Caco-2 (cell line): ENCODE measurements at regions of chr17 and their contacts with region 1.

Region 1: GRCh38 chr17:7239091-7240027 is at the start of gene PHF23:
- DNase-seq: peak; percentile 93 to 96
- H3K4me3 ChIP-seq: peak within 1 kb of the TSS; percentile 77
- H3K4me3 Mint-ChIP-seq: peak within 1 kb of the TSS; percentile 94
- H3K27ac Mint-ChIP-seq: peak within 1 kb of the TSS; percentile 82
- H3K4me1 ChIP-seq: peaks cover 6% of the 10 kb centered on the region; the same call in 1 of the 2 replicates
- H3K4me1 Mint-ChIP-seq: peaks cover 22% of the 10 kb centered on the region
- H3K27me3 ChIP-seq: no peaks in the 10 kb centered on the region
- H3K27me3 Mint-ChIP-seq: peaks cover 3% of the 10 kb centered on the region
- CTCF ChIP-seq: no peak
- total RNA-seq, gene PHF23: 20.5 and 20.6 TPM in 2 replicates

Region 2: DNA sequence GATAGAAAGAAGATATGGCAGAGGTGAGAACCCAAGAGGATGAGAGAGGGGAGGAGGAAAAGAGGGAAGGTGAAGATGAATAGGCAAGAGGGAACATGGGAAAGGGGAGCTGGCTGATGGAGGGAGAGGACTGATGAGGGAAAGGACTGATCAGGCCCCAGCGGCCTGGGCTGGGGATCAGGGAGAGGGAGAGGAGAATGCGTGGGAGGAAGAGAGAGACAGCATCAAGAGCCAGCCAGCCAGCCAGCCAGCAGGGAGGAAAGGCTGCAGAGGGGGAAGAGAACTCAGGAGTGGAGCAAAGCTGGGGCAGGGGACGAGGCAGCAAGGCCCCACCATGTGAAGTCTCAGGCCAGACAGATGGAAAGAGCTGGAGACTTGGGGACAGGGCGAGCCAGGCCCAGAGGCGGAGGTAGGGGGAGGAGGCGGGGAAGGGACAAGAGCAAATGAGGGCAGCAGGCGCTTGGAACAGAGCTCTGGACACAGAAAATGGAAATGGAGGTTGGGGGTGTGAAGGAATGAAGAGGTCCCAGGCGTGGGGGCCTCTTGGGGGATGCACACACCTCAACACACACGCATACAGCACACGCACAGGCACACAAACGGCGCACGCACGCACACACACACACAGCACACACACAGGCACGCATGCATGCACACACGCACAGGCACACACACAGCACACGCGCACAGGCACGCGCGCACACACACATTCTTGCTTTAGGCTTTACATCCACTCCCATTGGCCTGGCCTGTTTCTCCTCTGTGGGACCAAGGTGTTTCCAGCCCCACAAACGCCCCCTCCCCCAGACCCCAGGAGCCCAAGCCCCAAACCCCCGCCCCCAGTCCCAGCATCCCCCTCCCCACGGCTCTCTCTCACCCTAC is 32.0 kb before region 1 on chr17:
- CTCF ChIA-PET with region 1: no interaction called
- POLR2A ChIA-PET with region 1: no interaction called
- intact Hi-C with region 1: no loop called
- DNase-seq: no peak
- H3K4me3 ChIP-seq: no peak overlapping the region
- H3K4me3 Mint-ChIP-seq: no peak overlapping the region
- H3K27ac Mint-ChIP-seq: no peak overlapping the region
- H3K4me1 ChIP-seq: no peaks in the 10 kb centered on the region
- H3K4me1 Mint-ChIP-seq: peaks cover 6% of the 10 kb centered on the region
- H3K27me3 ChIP-seq: no peaks in the 10 kb centered on the region
- H3K27me3 Mint-ChIP-seq: no peaks in the 10 kb centered on the region
- CTCF ChIP-seq: no peak

Region 3: DNA sequence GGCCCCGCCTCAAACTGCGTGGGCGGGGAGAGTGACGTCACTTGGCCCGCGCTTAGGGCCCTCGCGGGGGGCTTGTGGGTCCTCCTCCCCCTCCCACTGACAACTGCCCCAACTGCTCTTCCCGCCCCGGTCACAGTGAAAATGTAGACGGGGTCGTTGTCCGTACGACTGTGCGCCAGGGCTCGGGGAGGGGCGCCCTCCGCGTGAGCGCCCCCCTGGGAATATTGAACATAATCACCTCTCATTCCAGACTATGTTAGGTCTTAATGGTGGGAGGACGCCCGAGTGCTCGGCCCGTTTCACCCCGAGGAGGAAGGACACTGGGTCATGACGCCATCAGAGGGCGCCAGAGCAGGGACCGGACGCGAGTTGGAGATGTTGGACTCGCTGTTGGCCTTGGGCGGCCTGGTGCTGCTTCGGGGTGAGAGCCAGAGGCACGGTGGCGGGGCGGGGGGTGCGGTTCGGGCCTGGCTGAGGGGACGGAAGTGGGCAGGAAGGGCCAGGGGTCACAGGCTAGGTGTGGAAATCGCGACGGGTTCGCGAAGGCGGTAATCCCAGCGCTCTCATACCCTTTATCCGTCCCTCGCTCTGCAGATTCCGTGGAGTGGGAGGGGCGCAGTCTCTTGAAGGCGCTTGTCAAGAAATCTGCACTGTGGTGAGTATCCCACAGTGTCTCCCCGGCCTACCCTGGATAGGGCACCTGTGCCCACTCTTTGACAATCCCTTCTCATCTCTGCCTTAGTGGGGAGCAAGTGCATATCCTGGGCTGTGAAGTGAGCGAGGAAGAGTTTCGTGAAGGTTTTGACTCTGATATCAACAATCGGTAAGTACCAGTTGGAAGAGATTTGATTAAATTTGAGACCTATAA is 13.1 kb after region 1 on chr17 and contains the start of gene ELP5:
- CTCF ChIA-PET with region 1: interaction called, 3 read pairs
- POLR2A ChIA-PET with region 1: interaction called, 3 read pairs
- intact Hi-C with region 1: loop called (anchors 1 kb)
- DNase-seq: peak; percentile 88 to 93
- H3K4me3 ChIP-seq: peak within 1 kb of the TSS; percentile 70
- H3K4me3 Mint-ChIP-seq: peak within 1 kb of the TSS; percentile 88
- H3K27ac Mint-ChIP-seq: peak within 1 kb of the TSS; percentile 98
- H3K4me1 ChIP-seq: no peaks in the 10 kb centered on the region
- H3K4me1 Mint-ChIP-seq: peaks cover 11% of the 10 kb centered on the region
- H3K27me3 ChIP-seq: no peaks in the 10 kb centered on the region
- H3K27me3 Mint-ChIP-seq: no peaks in the 10 kb centered on the region
- CTCF ChIP-seq: no peak
- total RNA-seq, gene ELP5: 43.2 and 43.3 TPM in 2 replicates